Transverse colon (tissue), 4 donors: ENCODE measurements at regions of chr5 and their contacts with region 1.

Region 1: DNA sequence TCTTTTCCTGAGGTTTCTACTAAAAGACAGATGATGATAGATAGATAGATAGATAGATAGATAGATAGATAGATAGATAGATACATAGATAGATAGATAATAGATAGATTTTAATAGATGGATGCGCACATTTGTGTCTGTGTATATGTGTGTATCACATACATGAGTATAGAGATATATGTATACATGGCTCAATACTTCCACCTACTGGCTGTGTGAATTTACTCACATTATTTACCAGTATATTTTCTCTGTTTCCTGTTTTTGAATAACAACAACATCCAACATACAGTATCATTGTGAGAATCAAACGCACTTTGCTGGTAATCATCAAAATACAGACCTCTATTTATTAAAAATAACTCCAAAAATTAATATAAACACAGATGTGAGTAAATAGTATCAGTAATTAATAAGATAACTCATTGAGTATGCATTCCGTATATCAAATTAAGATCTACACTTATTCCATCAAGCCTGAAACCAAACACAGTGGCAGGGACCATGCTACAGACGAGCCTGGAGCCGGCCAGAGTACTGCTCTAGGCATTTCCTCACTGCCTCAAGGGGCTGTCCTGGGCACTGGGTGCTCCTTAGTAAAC is 338.0 kb downstream of the SEMA5A start:
- DNase-seq: no peak
- H3K4me3 ChIP-seq: no peak overlapping the region
- H3K27ac ChIP-seq: no peak overlapping the region
- H3K4me1 ChIP-seq: no peaks in the 10 kb centered on the region
- H3K27me3 ChIP-seq: no peaks in the 10 kb centered on the region
- CTCF ChIP-seq: peak; percentile 32 to 56 (median 47)
- EP300 ChIP-seq: no peak
- POLR2A ChIP-seq: no peak

Region 2: GRCh38 chr5:7904170-7904569 is 1303.7 kb before region 1 on chr5:
- in situ Hi-C with region 1: loop called in 1 of 4 experiments (anchors 25 kb)
- intact Hi-C with region 1: no loop called
- DNase-seq: no peak
- H3K4me3 ChIP-seq: no peak overlapping the region
- H3K27ac ChIP-seq: no peak overlapping the region
- H3K4me1 ChIP-seq: no peaks in the 10 kb centered on the region
- H3K27me3 ChIP-seq: no peaks in the 10 kb centered on the region
- CTCF ChIP-seq: no peak
- EP300 ChIP-seq: no peak
- POLR2A ChIP-seq: no peak

Region 3: GRCh38 chr5:7927466-7928375 is 1280.2 kb before region 1 on chr5:
- in situ Hi-C with region 1: loop called in 2 of 4 experiments (anchors 25 kb)
- intact Hi-C with region 1: no loop called
- DNase-seq: peak; percentile 74
- H3K4me3 ChIP-seq: no peak overlapping the region
- H3K27ac ChIP-seq: no peak overlapping the region
- H3K4me1 ChIP-seq: no peaks in the 10 kb centered on the region
- H3K27me3 ChIP-seq: no peaks in the 10 kb centered on the region
- CTCF ChIP-seq: peak; percentile 64 to 80 (median 74)
- EP300 ChIP-seq: no peak
- POLR2A ChIP-seq: no peak

Region 4: DNA sequence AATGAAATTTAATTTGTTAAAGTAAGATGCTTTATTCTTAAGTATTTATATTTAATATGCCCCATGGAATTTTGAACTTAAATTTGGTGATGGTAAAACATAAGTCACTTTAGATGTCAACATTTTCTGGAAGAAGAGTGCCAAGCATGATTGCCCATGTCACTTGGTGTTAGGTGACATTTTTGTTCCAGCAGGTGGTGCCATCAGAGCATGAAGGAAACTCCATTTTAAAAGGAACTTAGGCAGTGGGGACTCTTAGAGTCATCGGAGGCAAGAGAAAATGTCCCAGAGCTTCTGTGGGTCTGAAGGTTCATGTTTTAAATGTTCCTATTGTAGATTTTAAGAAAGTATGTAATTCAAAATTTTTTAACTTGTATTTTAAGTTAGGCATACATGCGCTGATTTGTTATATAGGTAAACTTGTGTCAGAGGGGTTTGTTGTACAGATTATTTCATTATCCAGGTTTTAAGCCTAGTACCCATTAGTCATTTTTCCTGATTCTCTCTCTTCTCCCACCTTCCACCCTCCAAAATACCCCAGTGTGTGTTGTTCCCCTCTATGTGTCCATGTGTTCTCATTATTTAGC is 451.3 kb before region 1 on chr5:
- in situ Hi-C with region 1: loop called in 2 of 4 experiments (anchors 25 kb)
- intact Hi-C with region 1: no loop called
- DNase-seq: peak; percentile 8
- H3K4me3 ChIP-seq: no peak overlapping the region
- H3K27ac ChIP-seq: no peak overlapping the region
- H3K4me1 ChIP-seq: no peaks in the 10 kb centered on the region
- H3K27me3 ChIP-seq: no peaks in the 10 kb centered on the region
- CTCF ChIP-seq: peak in 2 of 5 experiments; percentile 32 to 47
- EP300 ChIP-seq: no peak
- POLR2A ChIP-seq: no peak